ENCODE measurements at regions of chr5 and their contacts with region 1.

Region 1: DNA sequence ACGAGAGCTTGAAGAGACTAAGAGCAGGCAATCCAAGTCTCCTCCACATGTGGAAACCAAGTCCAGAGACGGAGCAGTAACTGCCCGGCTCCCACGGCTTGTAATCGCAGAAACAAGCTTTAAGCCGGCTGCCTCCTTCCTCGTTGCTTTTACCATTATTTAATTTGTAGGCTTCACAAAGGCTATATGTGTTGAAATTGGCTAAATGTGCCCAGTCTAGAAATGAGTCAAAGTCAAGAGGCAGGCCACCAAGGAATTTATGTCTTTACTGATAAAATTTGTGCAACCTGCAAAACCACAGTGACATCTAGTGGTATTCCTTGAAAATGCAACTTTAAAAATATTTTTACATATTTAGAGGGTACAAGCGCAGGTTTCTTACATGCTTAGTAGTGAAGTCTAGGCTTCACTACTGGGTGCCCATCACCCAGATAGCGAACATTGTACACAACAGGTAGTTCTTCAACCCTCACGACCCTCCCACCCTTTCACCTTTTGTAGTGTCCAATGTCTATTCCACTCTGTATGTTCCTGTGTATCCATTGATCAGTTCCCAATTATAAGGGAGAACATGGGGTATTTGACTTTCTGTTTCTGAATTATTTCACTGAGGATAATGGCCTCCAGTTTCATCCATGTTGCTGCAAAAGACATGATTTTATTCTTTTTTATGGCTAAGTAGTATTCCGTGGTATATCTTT is 33.5 kb upstream of the EBF1 start:
- DNase-seq: no peak
- H3K4me3 Mint-ChIP-seq: no peak overlapping the region
- H3K27ac Mint-ChIP-seq: no peak overlapping the region
- H3K4me1 Mint-ChIP-seq: no peaks in the 10 kb centered on the region
- H3K27me3 Mint-ChIP-seq: peaks cover 3% of the 10 kb centered on the region

Region 2: GRCh38 chr5:157761690-157762621 is 1371.2 kb before region 1 on chr5:
- CTCF ChIA-PET with region 1: no interaction called
- intact Hi-C with region 1: loop called (anchors 5 kb)
- DNase-seq: peak; percentile 35
- H3K4me3 Mint-ChIP-seq: no peak overlapping the region
- H3K27ac Mint-ChIP-seq: no peak overlapping the region
- H3K4me1 Mint-ChIP-seq: peaks cover 7% of the 10 kb centered on the region
- H3K27me3 Mint-ChIP-seq: no peaks in the 10 kb centered on the region

Region 3: DNA sequence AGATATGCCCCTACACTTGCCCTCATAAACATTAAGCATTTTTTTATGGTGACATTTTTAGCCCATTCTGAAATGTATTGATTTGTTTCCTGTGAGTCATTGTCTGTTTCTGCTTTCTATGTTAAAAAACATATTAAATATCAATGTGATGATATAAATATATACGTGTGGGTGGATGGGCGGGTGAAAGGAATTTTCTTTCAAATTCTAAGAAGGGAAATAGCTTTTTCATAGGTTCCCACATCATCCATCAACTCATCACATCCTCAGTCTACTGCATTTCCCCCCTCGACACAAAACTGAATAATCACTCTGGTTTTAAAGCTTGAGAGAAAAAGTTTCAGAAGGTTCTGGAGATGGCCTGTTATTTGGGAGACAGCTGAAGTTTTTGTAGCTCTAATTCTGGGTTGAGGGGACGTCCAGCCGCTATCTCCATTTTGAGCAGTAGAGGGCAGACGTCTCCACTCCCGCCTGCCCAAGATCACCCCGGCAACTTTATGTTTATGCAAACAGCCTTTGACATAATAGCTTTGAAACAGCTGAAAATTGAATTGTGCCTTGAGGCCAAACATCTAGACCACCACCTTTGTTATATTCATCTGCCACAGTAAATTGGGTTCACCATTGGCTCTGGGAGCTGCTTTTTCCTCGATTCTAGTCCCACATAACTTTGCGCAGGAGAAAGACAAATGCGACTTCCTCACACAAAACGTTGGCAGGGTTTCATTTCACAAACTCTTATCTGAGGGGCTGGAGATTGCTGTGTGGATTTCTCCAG is 1058.0 kb before region 1 on chr5:
- CTCF ChIA-PET with region 1: interaction called, 3 read pairs
- intact Hi-C with region 1: loop called (anchors 2 kb)
- DNase-seq: peak; percentile 63
- H3K4me3 Mint-ChIP-seq: no peak overlapping the region
- H3K27ac Mint-ChIP-seq: no peak overlapping the region
- H3K4me1 Mint-ChIP-seq: peaks cover 3% of the 10 kb centered on the region
- H3K27me3 Mint-ChIP-seq: peaks cover 2% of the 10 kb centered on the region

Region 4: GRCh38 chr5:158174918-158175851 is 958.0 kb before region 1 on chr5:
- CTCF ChIA-PET with region 1: interaction called, 6 read pairs
- intact Hi-C with region 1: loop called (anchors 1 kb)
- DNase-seq: peak; percentile 75
- H3K4me3 Mint-ChIP-seq: no peak overlapping the region
- H3K27ac Mint-ChIP-seq: no peak overlapping the region
- H3K4me1 Mint-ChIP-seq: no peaks in the 10 kb centered on the region
- H3K27me3 Mint-ChIP-seq: no peaks in the 10 kb centered on the region

Region 5: DNA sequence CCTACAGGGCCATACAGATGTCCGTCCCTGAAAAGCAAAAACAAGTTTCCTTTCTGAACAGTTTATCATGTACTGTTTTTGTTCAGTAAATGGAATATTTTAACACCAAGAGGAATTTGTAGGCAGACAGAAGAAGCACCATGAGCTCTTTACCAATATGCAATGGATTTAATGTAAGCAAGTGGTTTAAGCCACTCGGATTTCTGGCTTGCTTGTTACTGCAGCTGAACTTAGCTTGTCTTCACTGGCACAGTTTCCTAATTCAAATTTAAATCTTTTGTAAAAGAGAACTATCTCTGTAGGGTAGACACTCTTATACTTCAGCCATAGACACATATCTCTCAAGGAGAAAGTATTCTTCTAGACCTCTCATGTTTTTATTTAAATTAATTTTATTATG is 20.8 kb before region 1 on chr5:
- CTCF ChIA-PET with region 1: interaction called, 15 read pairs
- intact Hi-C with region 1: loop called (anchors 1 kb)
- DNase-seq: no peak
- H3K4me3 Mint-ChIP-seq: no peak overlapping the region
- H3K27ac Mint-ChIP-seq: no peak overlapping the region
- H3K4me1 Mint-ChIP-seq: peaks cover 6% of the 10 kb centered on the region
- H3K27me3 Mint-ChIP-seq: peaks cover 9% of the 10 kb centered on the region

Region 6: DNA sequence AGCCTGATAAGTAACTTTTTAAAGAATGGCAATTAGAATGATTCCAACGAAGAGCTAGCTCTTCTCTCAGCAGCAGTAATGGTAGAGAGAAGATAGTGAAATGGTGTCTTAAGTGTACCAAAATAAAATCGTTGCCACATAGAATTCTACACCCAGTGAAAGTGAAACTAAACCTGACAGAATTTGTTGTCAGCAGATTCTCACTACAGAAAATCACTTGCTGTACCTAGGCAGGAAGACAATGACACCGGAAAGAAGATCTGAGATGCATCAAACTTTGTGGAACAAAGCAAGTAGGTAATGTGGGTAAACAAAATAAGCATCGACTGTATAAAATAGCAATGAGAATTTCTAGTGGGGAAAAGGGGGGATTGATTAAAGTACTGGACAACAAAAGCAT is 12.7 kb before region 1 on chr5:
- CTCF ChIA-PET with region 1: interaction called, 11 read pairs
- intact Hi-C with region 1: no loop called
- DNase-seq: no peak
- H3K4me3 Mint-ChIP-seq: peak overlapping the region; percentile 51
- H3K27ac Mint-ChIP-seq: peak overlapping the region; percentile 70
- H3K4me1 Mint-ChIP-seq: peaks cover 26% of the 10 kb centered on the region
- H3K27me3 Mint-ChIP-seq: no peaks in the 10 kb centered on the region